ENCODE measurements at regions of chr12 and their contacts with region 1.

Region 1: GRCh38 chr12:40192704-40193255 is 32.0 kb upstream of the LRRK2 start:
- DNase-seq: peak; percentile 50
- ATAC-seq: peak; percentile 96
- H3K4me3 Mint-ChIP-seq: peak overlapping the region; percentile 83
- H3K27ac Mint-ChIP-seq: peak overlapping the region; percentile 93
- H3K4me1 Mint-ChIP-seq: peaks cover 45% of the 10 kb centered on the region
- H3K27me3 Mint-ChIP-seq: no peaks in the 10 kb centered on the region
- CTCF ChIP-seq: no peak

Region 2: DNA sequence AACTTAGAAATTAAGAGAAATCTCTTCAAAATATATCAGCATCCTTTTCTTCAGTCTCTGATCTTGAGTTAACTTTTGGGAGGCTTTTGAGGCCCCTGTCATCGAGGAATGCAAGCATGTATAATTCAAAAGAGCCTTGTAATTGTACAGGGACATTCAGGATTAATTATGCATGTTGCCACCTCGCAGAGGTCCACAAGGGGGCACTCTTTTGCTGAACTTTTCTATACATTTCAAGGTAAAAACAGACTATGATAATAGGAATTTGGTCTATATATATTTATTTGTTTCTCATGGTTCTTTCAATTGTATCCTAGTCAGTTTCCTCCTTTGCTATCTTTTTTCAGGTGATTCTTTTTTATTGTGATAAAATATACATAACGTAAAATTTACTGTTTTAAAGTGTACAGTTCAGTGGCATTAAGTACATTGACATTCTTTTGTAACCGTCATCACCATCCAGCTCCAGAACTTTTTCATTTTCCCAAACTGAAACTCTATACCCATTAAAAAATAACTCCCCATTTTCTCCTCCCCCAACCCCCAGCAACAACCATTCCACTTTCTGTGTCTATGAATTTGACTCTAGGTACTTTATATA is 39.9 kb before region 1 on chr12:
- CTCF ChIA-PET with region 1: interaction called, 13 read pairs
- POLR2A ChIA-PET with region 1: interaction called, 34 read pairs
- intact Hi-C with region 1: loop called (anchors 1 kb)
- DNase-seq: peak; percentile 33
- ATAC-seq: peak; percentile 56
- H3K4me3 Mint-ChIP-seq: no peak overlapping the region
- H3K27ac Mint-ChIP-seq: peak overlapping the region; percentile 3
- H3K4me1 Mint-ChIP-seq: peaks cover 52% of the 10 kb centered on the region
- H3K27me3 Mint-ChIP-seq: no peaks in the 10 kb centered on the region
- CTCF ChIP-seq: peak; percentile 58

Region 3: GRCh38 chr12:40158592-40159111 is 34.1 kb before region 1 on chr12:
- CTCF ChIA-PET with region 1: interaction called, 13 read pairs
- POLR2A ChIA-PET with region 1: interaction called, 34 read pairs
- intact Hi-C with region 1: loop called (anchors 1 kb)
- DNase-seq: no peak
- ATAC-seq: peak; percentile 76
- H3K4me3 Mint-ChIP-seq: peak overlapping the region; percentile 69
- H3K27ac Mint-ChIP-seq: peak overlapping the region; percentile 87
- H3K4me1 Mint-ChIP-seq: peaks cover 56% of the 10 kb centered on the region
- H3K27me3 Mint-ChIP-seq: no peaks in the 10 kb centered on the region
- CTCF ChIP-seq: no peak

Region 4: GRCh38 chr12:40168868-40169267 is 23.9 kb before region 1 on chr12:
- CTCF ChIA-PET with region 1: interaction called, 3 read pairs
- POLR2A ChIA-PET with region 1: interaction called, 7 read pairs
- intact Hi-C with region 1: loop called (anchors 1 kb)
- DNase-seq: no peak
- ATAC-seq: peak; percentile 77
- H3K4me3 Mint-ChIP-seq: peak overlapping the region; percentile 70
- H3K27ac Mint-ChIP-seq: peak overlapping the region; percentile 82
- H3K4me1 Mint-ChIP-seq: peaks cover 34% of the 10 kb centered on the region
- H3K27me3 Mint-ChIP-seq: no peaks in the 10 kb centered on the region
- CTCF ChIP-seq: no peak

Region 5: DNA sequence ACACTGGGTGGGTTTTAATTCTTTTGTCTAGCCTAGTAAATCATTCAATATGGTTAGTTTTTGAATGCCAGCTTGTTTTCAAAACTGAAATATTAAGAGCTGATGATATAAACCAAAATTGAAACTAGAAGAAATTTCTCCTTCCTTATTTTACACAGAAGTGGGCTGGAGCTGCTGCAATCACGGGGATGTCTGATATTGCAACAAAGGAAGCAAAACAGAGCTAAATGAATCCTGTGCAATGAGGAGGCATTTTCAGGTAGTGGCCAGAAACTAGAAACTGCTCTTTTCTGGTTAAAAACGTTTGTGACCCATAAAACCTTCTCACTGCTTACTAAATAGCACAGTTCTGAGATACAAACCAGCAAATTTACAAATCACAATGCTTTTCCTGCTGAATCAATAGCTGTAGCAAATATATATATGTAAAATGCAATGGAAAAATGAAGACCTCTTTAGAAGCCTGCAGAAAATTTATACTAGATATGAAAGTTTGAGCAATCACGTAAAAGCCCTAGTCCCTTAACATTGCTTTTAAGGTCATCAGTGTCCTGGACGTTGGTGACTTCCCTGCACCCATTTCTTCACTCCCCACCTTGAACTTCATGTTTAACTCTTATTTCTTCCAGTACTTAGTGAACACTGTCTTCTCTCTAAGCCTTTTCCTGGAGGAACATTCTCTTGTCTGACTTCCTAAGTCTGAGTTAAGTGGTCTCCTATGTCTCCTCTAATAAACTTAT is 16.1 kb after region 1 on chr12:
- CTCF ChIA-PET with region 1: interaction called, 3 read pairs
- POLR2A ChIA-PET with region 1: interaction called, 23 read pairs
- intact Hi-C with region 1: loop called (anchors 1 kb)
- DNase-seq: no peak
- ATAC-seq: peak; percentile 94
- H3K4me3 Mint-ChIP-seq: peak overlapping the region; percentile 61
- H3K27ac Mint-ChIP-seq: peak overlapping the region; percentile 90
- H3K4me1 Mint-ChIP-seq: peaks cover 28% of the 10 kb centered on the region
- H3K27me3 Mint-ChIP-seq: no peaks in the 10 kb centered on the region
- CTCF ChIP-seq: no peak

Region 6: DNA sequence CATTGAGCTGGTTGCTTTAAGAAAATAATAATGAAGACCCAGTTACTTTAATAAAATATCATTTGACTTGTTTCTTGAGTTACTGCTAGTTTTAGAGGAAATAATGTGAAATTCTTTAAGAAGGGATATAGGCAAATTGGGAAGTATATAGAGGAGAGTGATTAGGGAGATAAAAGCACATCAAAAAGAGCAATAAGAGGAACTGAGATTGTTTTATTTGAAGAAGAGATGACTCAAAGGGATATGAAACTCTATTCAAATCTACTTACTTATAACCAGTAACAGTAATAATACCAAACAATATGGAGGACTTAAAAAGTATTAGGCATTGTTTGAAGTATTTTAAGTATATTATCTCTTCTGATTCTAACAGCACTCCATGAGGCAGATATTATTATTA is 69.2 kb after region 1 on chr12:
- CTCF ChIA-PET with region 1: no interaction called
- POLR2A ChIA-PET with region 1: no interaction called
- intact Hi-C with region 1: loop called (anchors 1 kb)
- DNase-seq: no peak
- ATAC-seq: peak; percentile 73
- H3K4me3 Mint-ChIP-seq: peak overlapping the region; percentile 75
- H3K27ac Mint-ChIP-seq: peak overlapping the region; percentile 92
- H3K4me1 Mint-ChIP-seq: peaks cover 41% of the 10 kb centered on the region
- H3K27me3 Mint-ChIP-seq: no peaks in the 10 kb centered on the region
- CTCF ChIP-seq: no peak